H1 (cell line): ENCODE measurements at regions of chr6 and their contacts with region 1.

Region 1: DNA sequence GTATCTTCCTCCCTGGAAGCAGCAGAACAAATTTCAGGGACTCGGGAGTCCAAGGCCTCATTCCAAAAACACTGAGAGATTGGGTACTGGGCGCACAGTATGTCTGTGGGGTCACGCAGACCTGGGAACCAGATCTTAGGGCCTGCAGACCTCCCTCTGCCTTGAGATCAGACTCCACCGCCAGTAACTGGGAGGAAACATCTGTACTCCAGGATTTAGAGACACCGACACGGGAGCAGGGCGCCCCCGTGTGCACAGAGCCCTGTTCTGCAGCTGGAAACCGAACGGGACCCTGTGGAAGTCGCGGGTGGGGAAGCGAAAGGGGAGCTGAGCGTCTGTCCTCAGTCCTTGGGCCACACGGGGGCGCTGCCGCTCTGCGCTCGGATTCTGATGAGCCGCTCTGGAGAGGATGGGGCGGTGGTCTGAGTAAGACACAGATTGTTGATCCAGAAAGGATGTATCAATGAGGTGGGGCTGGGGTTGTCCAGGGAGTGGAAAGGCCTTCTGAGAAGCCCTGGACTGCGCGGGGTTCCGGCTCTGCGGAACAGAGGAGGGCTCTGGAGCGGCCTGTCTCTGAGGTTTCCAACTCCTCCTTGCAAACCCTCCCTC is 35.7 kb upstream of the HLA-E start:
- DNase-seq: peak; percentile 84 to 99
- H3K4me3 ChIP-seq: no peak overlapping the region
- H3K27ac ChIP-seq: no peak overlapping the region
- H3K4me1 ChIP-seq: peaks cover 0 to 3% (median under 1%) of the 10 kb centered on the region in 4 experiments; a peak in 3 of 7 replicates
- H3K27me3 ChIP-seq: peaks cover 0 to 36% (median 23%) of the 10 kb centered on the region in 4 experiments; a peak in 6 of 7 replicates
- CTCF ChIP-seq: peak; percentile 93 to 97 (median 94)
- EP300 ChIP-seq: no peak
- POLR2A ChIP-seq: no peak
- RAD21 ChIP-seq: peak; percentile 75 to 83

Region 2: GRCh38 chr6:30311101-30311500 is 142.5 kb before region 1 on chr6:
- CTCF ChIA-PET with region 1: no interaction called
- POLR2A ChIA-PET with region 1: no interaction called
- DNase-seq: no peak
- H3K4me3 ChIP-seq: no peak overlapping the region
- H3K27ac ChIP-seq: no peak overlapping the region
- H3K4me1 ChIP-seq: 0 out of 7 replicates have a peak, but pooled peaks cover 0 to 2% (median 0%) of the 10 kb centered on the region in 4 experiments
- H3K27me3 ChIP-seq: no peaks in the 10 kb centered on the region
- CTCF ChIP-seq: no peak
- EP300 ChIP-seq: no peak
- POLR2A ChIP-seq: no peak
- RAD21 ChIP-seq: no peak

Region 3: GRCh38 chr6:30357678-30358540 is 95.7 kb before region 1 on chr6:
- CTCF ChIA-PET with region 1: interaction called, 16 read pairs
- POLR2A ChIA-PET with region 1: no interaction called
- DNase-seq: peak; percentile 71 to 79
- H3K4me3 ChIP-seq: peak overlapping the region; percentile 51 to 80 (median 76)
- H3K27ac ChIP-seq: no peak overlapping the region
- H3K4me1 ChIP-seq: peaks cover 0 to 6% (median 2%) of the 10 kb centered on the region in 4 experiments; a peak in 4 of 7 replicates
- H3K27me3 ChIP-seq: peaks cover 0 to 4% (median 2%) of the 10 kb centered on the region in 4 experiments; a peak in 3 of 7 replicates
- CTCF ChIP-seq: peak in 2 of 3 experiments; percentile 73 to 80; a peak in 3 of 4 replicates
- EP300 ChIP-seq: no peak
- POLR2A ChIP-seq: peak in 1 of 2 experiments; percentile 36; a peak in 2 of 3 replicates
- RAD21 ChIP-seq: peak; percentile 78 to 79

Region 4: DNA sequence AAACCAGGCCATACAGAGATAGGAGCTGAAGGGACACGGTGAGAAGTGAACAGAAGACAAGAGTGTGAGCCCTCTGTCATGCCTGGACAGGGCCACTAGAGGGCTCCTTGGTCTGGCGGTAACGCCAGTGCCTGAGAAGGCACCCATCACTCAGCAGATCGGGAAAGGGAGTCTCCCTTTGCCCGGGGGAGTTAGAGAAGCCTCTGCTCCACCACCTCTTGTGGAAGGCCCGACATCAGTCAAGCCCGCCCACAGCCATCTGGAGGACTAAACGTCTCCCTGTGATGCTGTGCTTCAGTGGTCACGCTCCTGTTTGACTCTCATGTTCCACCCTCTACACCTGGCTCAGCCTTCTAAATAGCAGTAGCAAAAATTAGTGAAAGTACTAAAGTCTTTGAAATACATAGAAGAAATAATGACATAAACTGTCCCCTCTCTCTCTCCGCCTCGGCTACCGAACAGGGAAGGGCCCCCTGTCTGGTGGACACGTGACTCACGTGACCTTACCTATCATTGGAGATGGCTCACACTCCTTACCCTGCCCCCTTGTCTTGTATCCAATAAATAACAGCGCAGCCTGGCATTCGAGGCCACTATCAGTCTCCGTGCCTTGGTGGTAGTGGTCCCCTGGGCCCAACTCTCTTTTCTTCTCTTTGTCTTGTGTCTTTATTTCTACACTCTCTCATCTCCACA is 42.0 kb before region 1 on chr6:
- CTCF ChIA-PET with region 1: interaction called, 17 read pairs
- POLR2A ChIA-PET with region 1: no interaction called
- DNase-seq: peak; percentile 51 to 79
- H3K4me3 ChIP-seq: peak overlapping the region in 1 of 4 experiments; percentile 33; a peak in 2 of 8 replicates
- H3K27ac ChIP-seq: no peak overlapping the region
- H3K4me1 ChIP-seq: no peaks in the 10 kb centered on the region; a peak in 1 of 7 replicates
- H3K27me3 ChIP-seq: peaks cover 0 to 2% (median under 1%) of the 10 kb centered on the region in 4 experiments; a peak in 3 of 7 replicates
- CTCF ChIP-seq: peak; percentile 77 to 82 (median 77)
- EP300 ChIP-seq: no peak
- POLR2A ChIP-seq: no peak
- RAD21 ChIP-seq: peak; percentile 59 to 67

Region 5: GRCh38 chr6:30463651-30464618 is 10.3 kb after region 1 on chr6:
- CTCF ChIA-PET with region 1: interaction called, 43 read pairs
- POLR2A ChIA-PET with region 1: interaction called, 5 read pairs
- DNase-seq: no peak
- H3K4me3 ChIP-seq: no peak overlapping the region
- H3K27ac ChIP-seq: no peak overlapping the region
- H3K4me1 ChIP-seq: no peaks in the 10 kb centered on the region
- H3K27me3 ChIP-seq: peaks cover 33 to 82% (median 72%) of the 10 kb centered on the region in 4 experiments
- CTCF ChIP-seq: no peak
- EP300 ChIP-seq: no peak
- POLR2A ChIP-seq: no peak
- RAD21 ChIP-seq: no peak

Region 6: GRCh38 chr6:30483677-30484279 is 30.2 kb after region 1 on chr6:
- CTCF ChIA-PET with region 1: interaction called, 13 read pairs
- POLR2A ChIA-PET with region 1: no interaction called
- DNase-seq: no peak
- H3K4me3 ChIP-seq: no peak overlapping the region
- H3K27ac ChIP-seq: no peak overlapping the region
- H3K4me1 ChIP-seq: peaks cover 0 to 2% (median 0%) of the 10 kb centered on the region in 4 experiments; a peak in 3 of 7 replicates
- H3K27me3 ChIP-seq: peaks cover 7 to 23% (median 17%) of the 10 kb centered on the region in 4 experiments; a peak in 6 of 7 replicates
- CTCF ChIP-seq: peak in 2 of 3 experiments; percentile 49 to 63; a peak in 3 of 4 replicates
- EP300 ChIP-seq: no peak
- POLR2A ChIP-seq: no peak
- RAD21 ChIP-seq: peak; percentile 68 to 75